ENCODE measurements at regions of chr2 and their contacts with region 1.

Region 1: GRCh38 chr2:121722479-121722878 is 14.2 kb downstream of the NIFK start:
- DNase-seq: peak; percentile 48 to 63
- ATAC-seq: peak; percentile 65 to 90
- H3K4me3 ChIP-seq: no peak overlapping the region
- H3K27ac ChIP-seq: peak overlapping the region; percentile 36 to 38; a peak in 3 of 6 replicates
- H3K4me1 ChIP-seq: peaks cover 17% of the 10 kb centered on the region
- CTCF ChIP-seq: no peak
- EP300 ChIP-seq: no peak
- POLR2A ChIP-seq: no peak
- RAD21 ChIP-seq: no peak

Region 2: GRCh38 chr2:121400201-121400600 is 322.3 kb before region 1 on chr2:
- CTCF ChIA-PET with region 1: interaction called, 10 read pairs
- POLR2A ChIA-PET with region 1: no interaction called
- DNase-seq: no peak
- ATAC-seq: no peak
- H3K4me3 ChIP-seq: no peak overlapping the region
- H3K27ac ChIP-seq: no peak overlapping the region
- H3K4me1 ChIP-seq: no peaks in the 10 kb centered on the region
- CTCF ChIP-seq: no peak
- EP300 ChIP-seq: no peak
- POLR2A ChIP-seq: no peak
- RAD21 ChIP-seq: no peak

Region 3: DNA sequence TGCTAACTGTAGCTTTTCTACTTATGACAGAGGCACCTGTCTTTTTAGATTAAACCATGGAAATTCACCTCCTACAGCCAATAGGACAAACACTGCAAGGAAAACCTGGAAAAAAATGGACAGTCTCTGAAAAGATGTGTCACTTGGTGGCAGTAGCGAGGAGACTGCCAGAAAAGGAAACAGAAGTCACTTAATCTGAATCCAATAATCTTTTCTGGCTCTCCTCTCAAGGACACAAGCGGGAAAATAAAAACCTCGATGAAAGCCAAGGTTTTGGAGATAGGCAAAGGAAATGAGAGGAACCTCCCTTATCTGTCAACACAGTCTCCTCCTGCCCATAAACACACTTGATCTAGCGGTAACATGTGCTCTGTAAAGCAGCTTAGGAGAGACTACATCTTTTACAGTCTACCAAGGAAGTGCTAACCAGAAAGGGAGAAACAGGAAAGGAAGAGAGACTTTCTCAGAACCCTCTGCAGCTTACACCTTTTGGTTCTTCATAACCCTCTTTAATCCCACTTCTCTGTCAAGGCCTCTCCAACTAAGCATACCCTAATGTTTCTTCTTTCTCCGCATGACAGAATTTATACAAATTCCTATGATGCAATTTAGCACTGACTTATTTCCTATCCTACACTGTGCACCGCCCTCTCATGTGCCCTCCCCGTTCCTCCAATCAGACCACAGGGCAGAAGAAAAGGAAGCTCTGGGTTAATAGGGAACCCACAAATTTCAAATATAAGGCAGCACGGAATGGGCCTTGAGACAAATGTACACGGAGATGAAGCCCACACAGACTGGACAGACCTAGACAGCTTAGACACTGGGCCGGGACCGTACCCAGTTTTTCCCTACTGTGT is 126.0 kb before region 1 on chr2:
- CTCF ChIA-PET with region 1: interaction called, 12 read pairs
- POLR2A ChIA-PET with region 1: no interaction called
- DNase-seq: peak; percentile 18 to 60
- ATAC-seq: peak; percentile 84 to 86; a peak in 5 of 6 replicates
- H3K4me3 ChIP-seq: no peak overlapping the region
- H3K27ac ChIP-seq: peak overlapping the region; percentile 47 to 58; a peak in 4 of 6 replicates
- H3K4me1 ChIP-seq: peaks cover 26% of the 10 kb centered on the region
- CTCF ChIP-seq: peak; percentile 63
- EP300 ChIP-seq: no peak
- POLR2A ChIP-seq: no peak
- RAD21 ChIP-seq: peak; percentile 54 to 57

Region 4: GRCh38 chr2:121649596-121650314 is 72.7 kb before region 1 on chr2:
- CTCF ChIA-PET with region 1: interaction called, 11 read pairs
- POLR2A ChIA-PET with region 1: interaction called, 3 read pairs
- DNase-seq: peak; percentile 96 to 98
- ATAC-seq: peak; percentile 96 to 98
- H3K4me3 ChIP-seq: peak overlapping the region; percentile 73
- H3K27ac ChIP-seq: peak overlapping the region; percentile 91 to 93
- H3K4me1 ChIP-seq: peaks cover 20% of the 10 kb centered on the region
- CTCF ChIP-seq: no peak
- EP300 ChIP-seq: no peak
- POLR2A ChIP-seq: peak; percentile 32
- RAD21 ChIP-seq: no peak

Region 5: GRCh38 chr2:121699421-121700333 is 22.8 kb before region 1 on chr2:
- CTCF ChIA-PET with region 1: interaction called, 13 read pairs
- POLR2A ChIA-PET with region 1: no interaction called
- DNase-seq: peak; percentile 76 to 78
- ATAC-seq: peak; percentile 94 to 98
- H3K4me3 ChIP-seq: 0 out of 3 replicates have a peak overlapping the region, but pooled peaks have one; percentile 20
- H3K27ac ChIP-seq: peak overlapping the region; percentile 73 to 87
- H3K4me1 ChIP-seq: peaks cover 30% of the 10 kb centered on the region
- CTCF ChIP-seq: no peak
- EP300 ChIP-seq: peak in 1 of 2 experiments; percentile 32; a peak in 1 of 5 replicates
- POLR2A ChIP-seq: no peak
- RAD21 ChIP-seq: no peak

Region 6: DNA sequence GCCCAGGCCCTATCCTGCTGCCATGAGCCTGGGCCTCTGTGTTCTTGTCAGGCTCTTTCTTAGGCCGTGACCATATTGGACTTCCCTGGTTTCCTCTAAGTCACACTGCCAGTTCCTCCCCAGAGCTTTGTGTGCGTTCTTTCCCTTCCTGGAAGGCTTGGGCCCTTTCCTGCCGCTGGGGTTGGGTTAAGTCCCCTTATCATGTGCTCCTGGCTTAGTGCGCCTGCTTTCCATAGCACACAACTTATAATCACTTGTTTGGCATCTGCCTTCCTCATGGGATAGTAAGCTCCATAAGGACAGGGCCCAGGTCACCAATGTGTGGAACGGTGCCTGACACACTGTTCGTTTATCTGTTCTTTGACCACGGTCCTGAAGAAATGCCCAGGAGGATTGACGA is 17.1 kb before region 1 on chr2:
- CTCF ChIA-PET with region 1: interaction called, 13 read pairs
- POLR2A ChIA-PET with region 1: no interaction called
- DNase-seq: no peak
- ATAC-seq: no peak
- H3K4me3 ChIP-seq: no peak overlapping the region
- H3K27ac ChIP-seq: no peak overlapping the region
- H3K4me1 ChIP-seq: peaks cover 22% of the 10 kb centered on the region
- CTCF ChIP-seq: no peak
- EP300 ChIP-seq: no peak
- POLR2A ChIP-seq: no peak
- RAD21 ChIP-seq: no peak